ENCODE measurements at regions of chr18 and their contacts with region 1.

Region 1: GRCh38 chr18:46173393-46174341 is 69.5 kb downstream of the HAUS1 start:
- DNase-seq: peak; percentile 96
- H3K4me3 Mint-ChIP-seq: peak overlapping the region; percentile 97
- H3K27ac Mint-ChIP-seq: peak overlapping the region; percentile 99
- H3K4me1 Mint-ChIP-seq: peaks cover 42% of the 10 kb centered on the region
- H3K27me3 Mint-ChIP-seq: no peaks in the 10 kb centered on the region

Region 2: GRCh38 chr18:46097801-46098615 is 75.7 kb before region 1 on chr18 and contains the start of gene ATP5F1A:
- CTCF ChIA-PET with region 1: interaction called, 14 read pairs
- POLR2A ChIA-PET with region 1: interaction called, 14 read pairs
- intact Hi-C with region 1: loop called (anchors 2 kb)
- DNase-seq: peak; percentile 94
- H3K4me3 Mint-ChIP-seq: peak within 1 kb of the TSS; percentile 98
- H3K27ac Mint-ChIP-seq: peak within 1 kb of the TSS; percentile 93
- H3K4me1 Mint-ChIP-seq: peaks cover 25% of the 10 kb centered on the region
- H3K27me3 Mint-ChIP-seq: no peaks in the 10 kb centered on the region
- total RNA-seq, gene ATP5F1A: 442 to 447 TPM

Region 3: DNA sequence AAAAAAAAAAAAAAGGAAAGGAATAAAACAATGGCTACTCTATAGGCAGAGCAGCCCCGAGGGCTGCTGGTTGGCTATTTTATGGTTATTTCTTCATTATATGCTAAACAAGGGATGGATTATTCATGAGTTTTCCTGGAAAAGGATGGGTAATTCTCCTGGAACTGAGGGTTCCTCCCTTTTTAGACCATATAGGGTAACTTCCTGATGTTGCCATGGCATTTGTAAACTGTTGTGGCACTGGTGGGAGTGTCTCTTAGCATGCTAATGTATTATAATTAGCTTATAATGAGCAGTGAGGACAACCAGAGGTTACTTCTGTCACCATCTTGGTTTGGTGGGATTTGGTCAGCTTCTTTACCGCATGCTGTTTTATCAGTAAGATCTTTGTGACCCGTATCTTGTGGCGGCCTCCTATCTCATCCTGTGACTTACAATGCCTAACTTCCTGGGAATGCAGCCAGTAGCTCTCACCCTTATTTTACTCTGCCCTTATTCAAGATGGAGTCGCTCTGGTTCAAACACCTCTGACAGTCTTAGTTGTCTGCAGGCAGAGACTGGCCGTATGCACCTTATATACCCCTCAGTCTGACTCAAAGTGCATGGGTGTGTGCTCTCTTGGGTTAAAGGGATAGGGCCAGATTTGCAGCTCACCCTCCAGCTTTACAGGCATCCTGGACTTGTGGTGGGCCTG is 11.8 kb before region 1 on chr18:
- CTCF ChIA-PET with region 1: interaction called, 60 read pairs
- POLR2A ChIA-PET with region 1: interaction called, 3 read pairs
- intact Hi-C with region 1: no loop called
- DNase-seq: no peak
- H3K4me3 Mint-ChIP-seq: no peak overlapping the region
- H3K27ac Mint-ChIP-seq: no peak overlapping the region
- H3K4me1 Mint-ChIP-seq: peaks cover 21% of the 10 kb centered on the region
- H3K27me3 Mint-ChIP-seq: no peaks in the 10 kb centered on the region

Region 4: DNA sequence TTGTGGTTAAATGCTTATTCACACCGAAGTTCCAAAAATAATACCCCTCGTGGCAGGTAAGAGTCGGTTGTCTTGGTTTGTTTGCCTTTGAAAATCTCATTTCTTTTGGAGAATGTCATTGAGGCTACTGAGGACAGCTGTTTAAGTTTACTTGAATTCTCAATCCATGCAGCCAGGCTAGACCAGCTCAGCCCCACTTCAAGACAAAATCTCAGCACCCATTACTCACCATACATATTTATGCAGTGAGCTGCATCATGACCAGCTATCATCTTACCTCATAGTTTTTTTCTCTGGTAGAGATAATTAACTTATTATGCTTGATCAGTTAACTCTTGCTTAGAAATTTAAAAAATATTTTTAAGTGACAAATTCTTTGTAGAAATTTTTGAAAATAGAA is 46.4 kb after region 1 on chr18:
- CTCF ChIA-PET with region 1: interaction called, 125 read pairs
- POLR2A ChIA-PET with region 1: interaction called, 3 read pairs
- intact Hi-C with region 1: no loop called
- DNase-seq: no peak
- H3K4me3 Mint-ChIP-seq: no peak overlapping the region
- H3K27ac Mint-ChIP-seq: no peak overlapping the region
- H3K4me1 Mint-ChIP-seq: peaks cover 82% of the 10 kb centered on the region
- H3K27me3 Mint-ChIP-seq: no peaks in the 10 kb centered on the region

Region 5: DNA sequence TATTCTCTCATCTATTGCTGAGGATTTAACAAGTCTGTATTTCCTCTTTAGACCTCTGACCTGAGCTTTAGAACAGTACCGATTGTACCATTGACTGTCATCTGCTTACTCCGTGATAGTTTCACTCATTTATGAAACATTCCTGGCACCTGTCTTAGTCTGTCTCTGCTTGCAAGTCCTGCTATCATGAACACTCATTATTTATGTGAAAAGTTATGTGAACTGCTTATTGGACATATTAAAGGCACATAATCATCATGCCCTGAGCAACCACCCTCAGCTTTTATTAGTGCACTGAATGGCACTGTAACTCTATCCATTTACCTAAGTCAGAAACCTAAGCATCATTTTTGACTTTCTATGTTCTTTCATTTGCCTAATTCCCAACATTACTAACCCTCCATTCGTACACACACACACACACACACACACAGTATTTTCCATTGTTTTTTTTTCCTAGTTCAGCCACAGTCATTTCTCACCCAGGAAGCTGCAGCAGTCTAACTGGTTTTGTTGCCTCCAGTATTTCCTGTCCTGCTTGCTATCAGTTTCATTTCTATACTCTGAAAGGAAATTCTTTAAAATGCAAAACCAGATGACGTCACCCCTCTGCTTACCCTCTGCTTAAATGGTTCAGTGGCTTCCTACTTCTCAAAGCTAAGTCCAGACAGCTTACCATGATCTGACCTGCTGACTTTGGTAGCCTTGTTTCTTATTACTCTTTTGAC is 76.6 kb after region 1 on chr18:
- CTCF ChIA-PET with region 1: interaction called, 33 read pairs
- POLR2A ChIA-PET with region 1: interaction called, 4 read pairs
- intact Hi-C with region 1: loop called (anchors 1 kb)
- DNase-seq: peak; percentile 62
- H3K4me3 Mint-ChIP-seq: peak overlapping the region; percentile 42
- H3K27ac Mint-ChIP-seq: peak overlapping the region; percentile 79
- H3K4me1 Mint-ChIP-seq: peaks cover 57% of the 10 kb centered on the region
- H3K27me3 Mint-ChIP-seq: no peaks in the 10 kb centered on the region

Region 6: DNA sequence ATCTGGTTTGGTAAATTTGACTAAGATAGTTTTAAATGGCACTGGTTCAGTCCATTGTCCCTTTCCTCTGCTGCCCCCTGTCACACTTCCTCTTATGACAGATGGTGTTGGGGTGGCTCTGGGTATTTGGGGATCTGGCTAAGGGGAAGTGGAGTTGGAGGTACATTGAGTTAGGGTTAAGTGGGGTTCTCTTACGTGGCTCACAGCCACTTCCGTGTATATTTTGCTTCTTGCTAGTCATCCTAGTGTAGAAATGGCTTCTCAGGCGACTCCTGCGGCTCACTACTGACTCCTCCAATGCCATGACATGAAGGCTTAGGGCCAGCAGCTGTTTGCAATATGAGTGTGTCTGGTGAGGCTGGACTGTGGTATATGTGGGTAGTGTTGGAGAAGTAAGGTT is 117.5 kb after region 1 on chr18:
- CTCF ChIA-PET with region 1: interaction called, 12 read pairs
- POLR2A ChIA-PET with region 1: no interaction called
- intact Hi-C with region 1: no loop called
- DNase-seq: no peak
- H3K4me3 Mint-ChIP-seq: no peak overlapping the region
- H3K27ac Mint-ChIP-seq: no peak overlapping the region
- H3K4me1 Mint-ChIP-seq: no peaks in the 10 kb centered on the region
- H3K27me3 Mint-ChIP-seq: no peaks in the 10 kb centered on the region

Region 7: GRCh38 chr18:46413684-46414083 is 240.0 kb after region 1 on chr18:
- CTCF ChIA-PET with region 1: no interaction called
- POLR2A ChIA-PET with region 1: no interaction called
- intact Hi-C with region 1: no loop called
- DNase-seq: no peak
- H3K4me3 Mint-ChIP-seq: no peak overlapping the region
- H3K27ac Mint-ChIP-seq: no peak overlapping the region
- H3K4me1 Mint-ChIP-seq: no peaks in the 10 kb centered on the region
- H3K27me3 Mint-ChIP-seq: no peaks in the 10 kb centered on the region

Region 8: GRCh38 chr18:46660955-46661749 is 487.5 kb after region 1 on chr18:
- CTCF ChIA-PET with region 1: interaction called, 98 read pairs
- POLR2A ChIA-PET with region 1: interaction called, 3 read pairs
- intact Hi-C with region 1: loop called (anchors 1 kb)
- DNase-seq: no peak
- H3K4me3 Mint-ChIP-seq: no peak overlapping the region
- H3K27ac Mint-ChIP-seq: no peak overlapping the region
- H3K4me1 Mint-ChIP-seq: no peaks in the 10 kb centered on the region
- H3K27me3 Mint-ChIP-seq: no peaks in the 10 kb centered on the region

Measured in activated CD4-positive, alpha-beta memory T cell treated with anti-CD3 and anti-CD28 coated beads for 36 hours (primary cell).